Breast epithelium (tissue), 4 donors: ENCODE measurements at regions of chr22 and their contacts with region 1.

Region 1: DNA sequence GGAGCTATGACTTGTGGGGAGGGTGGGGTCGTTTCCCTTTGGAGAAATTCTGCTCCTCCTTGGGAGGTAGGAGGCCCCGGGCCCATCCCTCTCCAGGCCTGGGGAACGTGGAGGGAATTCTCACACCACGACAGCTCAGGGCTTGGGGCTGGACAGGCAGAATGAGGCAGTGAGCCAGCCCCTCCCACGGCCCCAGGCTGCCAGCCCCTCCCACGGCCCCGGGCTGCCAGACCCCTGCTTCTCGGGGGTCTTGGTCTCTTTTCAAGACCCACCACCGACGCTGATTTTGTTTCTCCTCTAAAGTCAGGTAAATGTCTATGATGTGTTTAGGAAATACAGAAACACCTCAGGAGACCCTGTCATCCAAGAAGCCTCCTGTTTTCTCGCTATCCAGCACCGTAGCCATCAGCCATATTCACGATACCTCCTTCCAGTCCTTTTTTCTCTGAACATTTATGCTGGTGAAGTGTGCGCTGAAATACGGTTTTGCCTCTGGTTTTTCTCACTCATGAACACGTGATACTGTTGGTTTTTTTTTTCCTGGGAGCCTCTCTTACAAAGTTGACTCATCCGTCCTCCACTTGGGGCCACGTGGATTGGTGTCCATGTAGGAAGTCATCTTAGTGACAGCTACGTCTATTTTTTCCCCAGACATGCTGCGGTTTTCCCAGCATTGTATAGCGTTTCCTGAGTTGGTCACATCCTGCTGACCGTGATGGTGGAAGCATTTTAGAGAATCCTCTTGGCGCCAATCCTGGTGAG is 1219.6 kb downstream of the BRD1 start:
- DNase-seq: no peak
- H3K4me3 ChIP-seq: no peak overlapping the region
- H3K27ac ChIP-seq: no peak overlapping the region
- H3K4me1 ChIP-seq: no peaks in the 10 kb centered on the region
- H3K27me3 ChIP-seq: no peaks in the 10 kb centered on the region
- CTCF ChIP-seq: no peak
- POLR2A ChIP-seq: no peak

Region 2: DNA sequence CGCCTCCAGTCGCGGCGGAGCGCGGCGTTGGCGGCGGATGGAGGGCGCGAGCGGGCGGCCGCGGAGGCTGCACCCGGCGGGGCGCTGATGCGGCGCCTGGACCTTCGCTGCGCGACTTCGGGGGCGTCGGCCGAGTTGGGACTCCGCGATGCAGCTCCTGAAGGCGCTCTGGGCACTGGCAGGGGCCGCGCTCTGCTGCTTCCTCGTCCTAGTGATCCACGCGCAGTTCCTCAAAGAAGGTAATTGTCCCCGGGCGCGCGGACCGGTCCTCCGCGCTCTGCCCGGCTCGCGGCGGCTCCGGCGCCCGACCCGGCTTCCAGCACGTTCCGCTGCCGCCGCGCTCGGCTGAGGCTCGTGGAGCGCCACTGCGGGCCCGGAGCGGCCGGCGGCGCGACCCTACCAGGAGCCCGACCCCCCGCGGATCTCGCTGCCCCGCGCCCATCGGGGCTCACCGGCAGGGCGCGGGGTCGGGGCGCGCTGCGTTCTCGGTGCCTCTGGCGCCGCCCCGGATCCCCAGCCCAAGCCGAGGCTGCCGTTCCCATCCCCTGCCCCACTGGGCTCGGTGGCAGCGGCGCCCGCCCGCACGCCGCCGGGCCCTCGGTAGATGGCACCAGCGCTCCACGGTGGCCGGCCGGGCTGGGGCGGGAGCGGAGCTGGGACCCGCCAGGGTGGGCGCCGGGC is 31.6 kb before region 1 on chr22:
- intact Hi-C with region 1: loop called (anchors 2 kb)
- DNase-seq: no peak
- H3K4me3 ChIP-seq: peak overlapping the region; percentile 32 to 64 (median 53)
- H3K27ac ChIP-seq: no peak overlapping the region
- H3K4me1 ChIP-seq: no peaks in the 10 kb centered on the region
- H3K27me3 ChIP-seq: peaks cover 3 to 39% of the 10 kb centered on the region in 2 donors
- CTCF ChIP-seq: no peak
- POLR2A ChIP-seq: no peak